Activated B cell treated with CpG ODN at 0.5 μM for 24 hours (primary cell): ENCODE measurements at regions of chr14 and their contacts with region 1.

Region 1: GRCh38 chr14:91872517-91873470 is 5.5 kb upstream of the TC2N start:
- DNase-seq: no peak
- ATAC-seq: peak; percentile 14
- H3K4me3 Mint-ChIP-seq: peak overlapping the region; percentile 59
- H3K27ac Mint-ChIP-seq: peak overlapping the region; percentile 68
- H3K4me1 Mint-ChIP-seq: peaks cover 50% of the 10 kb centered on the region
- H3K27me3 Mint-ChIP-seq: no peaks in the 10 kb centered on the region
- CTCF ChIP-seq: no peak

Region 2: GRCh38 chr14:91836119-91836881 is 36.5 kb before region 1 on chr14:
- CTCF ChIA-PET with region 1: no interaction called
- POLR2A ChIA-PET with region 1: no interaction called
- intact Hi-C with region 1: loop called (anchors 1 kb)
- DNase-seq: peak; percentile 68
- ATAC-seq: peak; percentile 94
- H3K4me3 Mint-ChIP-seq: peak overlapping the region; percentile 89
- H3K27ac Mint-ChIP-seq: peak overlapping the region; percentile 78
- H3K4me1 Mint-ChIP-seq: peaks cover 53% of the 10 kb centered on the region
- H3K27me3 Mint-ChIP-seq: peaks cover 5% of the 10 kb centered on the region
- CTCF ChIP-seq: no peak

Region 3: DNA sequence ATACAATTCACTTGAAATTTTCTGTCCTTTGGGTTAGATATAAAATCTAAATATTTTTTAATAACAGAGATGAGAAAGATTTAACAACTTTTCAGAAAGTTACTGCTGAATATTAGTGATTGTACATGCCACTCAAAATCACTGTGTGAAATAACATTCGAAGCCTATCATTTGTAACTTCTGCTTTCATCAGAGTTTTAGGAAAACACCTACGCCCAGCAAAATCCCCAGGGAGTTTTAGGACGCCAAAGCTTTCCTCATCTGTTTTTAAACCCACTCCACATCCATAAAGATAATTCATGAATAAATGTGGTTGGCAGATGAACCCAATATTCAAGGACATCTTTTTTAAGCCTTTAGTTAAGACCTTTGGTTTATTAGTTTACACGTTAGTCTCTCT is 29.4 kb before region 1 on chr14:
- CTCF ChIA-PET with region 1: no interaction called
- POLR2A ChIA-PET with region 1: no interaction called
- intact Hi-C with region 1: loop called (anchors 2 kb)
- DNase-seq: no peak
- ATAC-seq: peak; percentile 73
- H3K4me3 Mint-ChIP-seq: peak overlapping the region; percentile 50
- H3K27ac Mint-ChIP-seq: peak overlapping the region; percentile 71
- H3K4me1 Mint-ChIP-seq: peaks cover 65% of the 10 kb centered on the region
- H3K27me3 Mint-ChIP-seq: peaks cover 3% of the 10 kb centered on the region
- CTCF ChIP-seq: no peak

Region 4: GRCh38 chr14:91899212-91899611 is 26.4 kb after region 1 on chr14:
- CTCF ChIA-PET with region 1: no interaction called
- POLR2A ChIA-PET with region 1: no interaction called
- intact Hi-C with region 1: no loop called
- DNase-seq: no peak
- ATAC-seq: no peak
- H3K4me3 Mint-ChIP-seq: no peak overlapping the region
- H3K27ac Mint-ChIP-seq: no peak overlapping the region
- H3K4me1 Mint-ChIP-seq: no peaks in the 10 kb centered on the region
- H3K27me3 Mint-ChIP-seq: peaks cover 11% of the 10 kb centered on the region
- CTCF ChIP-seq: no peak

Region 5: DNA sequence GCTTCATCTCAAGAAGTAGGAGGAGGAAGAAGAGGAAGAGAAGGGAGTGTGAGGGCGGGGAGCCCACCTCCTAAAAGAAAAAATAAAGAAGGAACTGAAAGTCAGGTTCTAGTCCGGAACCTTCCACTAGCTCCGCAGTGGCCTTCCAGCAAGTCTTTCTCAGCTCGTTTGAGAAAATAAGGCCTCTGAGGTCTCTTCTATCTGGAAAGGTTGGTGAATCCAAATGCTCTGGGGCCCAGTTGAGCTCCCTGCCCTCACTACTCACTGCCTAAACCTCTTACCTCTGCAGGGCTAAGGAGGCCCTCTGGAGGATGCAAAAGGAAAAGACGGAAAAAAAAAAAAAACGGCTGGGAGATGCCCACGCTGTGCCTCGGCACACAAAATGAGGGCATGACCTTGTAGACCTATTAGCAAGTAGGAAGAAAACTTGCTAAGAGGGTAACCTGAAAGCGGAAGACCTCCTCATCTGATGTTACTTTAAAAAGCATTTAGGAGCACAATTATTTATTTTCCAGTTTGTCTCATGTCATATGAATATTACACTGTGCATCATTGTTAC is 38.8 kb after region 1 on chr14:
- CTCF ChIA-PET with region 1: no interaction called
- POLR2A ChIA-PET with region 1: interaction called, 10 read pairs
- intact Hi-C with region 1: no loop called
- DNase-seq: peak; percentile 19
- ATAC-seq: peak; percentile 77
- H3K4me3 Mint-ChIP-seq: peak overlapping the region; percentile 61
- H3K27ac Mint-ChIP-seq: peak overlapping the region; percentile 85
- H3K4me1 Mint-ChIP-seq: peaks cover 16% of the 10 kb centered on the region
- H3K27me3 Mint-ChIP-seq: peaks cover 3% of the 10 kb centered on the region
- CTCF ChIP-seq: no peak

Region 6: DNA sequence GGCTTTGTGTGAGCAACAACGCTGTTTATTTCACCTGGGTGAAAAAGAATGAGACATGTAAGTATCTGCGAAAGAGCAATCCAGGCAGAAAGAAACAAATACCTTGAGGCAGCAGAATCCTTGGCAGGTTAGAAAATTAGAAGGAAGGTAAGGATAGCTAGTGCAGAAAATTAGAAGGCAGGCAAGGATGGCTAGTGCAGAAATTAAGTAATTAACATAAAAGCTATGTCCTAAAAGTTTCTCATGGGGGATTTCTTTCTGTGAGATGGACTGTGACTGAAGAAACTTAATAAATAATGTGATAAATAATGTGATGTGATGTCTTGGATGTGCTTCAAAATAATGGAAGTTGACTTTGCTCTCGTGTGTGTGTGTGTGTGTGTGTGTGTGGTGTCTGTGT is 177.0 kb after region 1 on chr14:
- CTCF ChIA-PET with region 1: no interaction called
- POLR2A ChIA-PET with region 1: no interaction called
- intact Hi-C with region 1: no loop called
- DNase-seq: no peak
- ATAC-seq: no peak
- H3K4me3 Mint-ChIP-seq: no peak overlapping the region
- H3K27ac Mint-ChIP-seq: no peak overlapping the region
- H3K4me1 Mint-ChIP-seq: no peaks in the 10 kb centered on the region
- H3K27me3 Mint-ChIP-seq: no peaks in the 10 kb centered on the region
- CTCF ChIP-seq: no peak